Common myeloid progenitor, CD34-positive (primary cell): ENCODE measurements at regions of chr6 and their contacts with region 1.

Region 1: DNA sequence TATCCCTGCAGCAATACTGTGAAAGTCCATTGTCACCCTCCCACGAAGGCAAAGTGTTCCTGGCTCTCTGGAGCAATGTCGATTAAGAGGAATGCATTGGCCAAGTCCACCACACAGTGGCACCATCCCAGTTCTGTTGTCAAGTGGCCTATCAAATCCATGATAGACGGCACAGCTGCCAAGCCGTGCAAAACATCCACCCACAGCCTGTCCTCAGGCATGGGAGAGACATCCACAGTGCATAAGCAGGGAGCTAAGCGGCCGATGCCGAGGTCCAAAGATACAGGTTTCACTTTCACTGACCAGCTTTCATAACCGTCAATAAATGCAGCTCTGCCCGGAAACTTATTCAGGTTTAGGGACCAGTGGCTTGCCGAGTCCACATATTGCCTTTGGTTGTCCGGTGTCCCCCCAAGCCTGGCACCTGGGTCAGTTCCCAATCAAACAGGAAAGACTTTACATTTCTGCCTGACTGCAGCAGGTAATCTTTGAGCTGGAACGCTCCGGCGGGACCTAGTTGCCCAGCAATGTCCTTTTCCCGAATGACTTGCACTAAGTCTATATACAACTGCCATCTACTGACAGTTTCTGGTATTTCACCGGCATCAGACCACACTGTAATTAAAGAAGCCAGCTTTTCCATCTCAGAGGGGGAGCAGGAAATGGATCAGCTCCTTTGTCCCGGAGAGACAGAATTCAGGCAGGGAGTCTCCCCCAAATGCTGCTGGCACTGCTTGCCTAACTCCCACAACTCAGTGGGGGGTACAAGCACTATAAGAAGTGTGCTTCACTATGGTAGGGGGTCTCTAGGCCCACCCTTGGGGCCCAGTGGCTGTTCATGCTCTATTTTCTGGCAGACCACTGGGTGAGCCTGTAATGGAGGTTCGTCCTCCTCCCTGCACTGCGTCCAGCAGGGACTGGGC is 6.3 kb downstream of the ZKSCAN3 start:
- DNase-seq: peak; percentile 85 to 92 (median 91)
- H3K4me3 ChIP-seq: peak overlapping the region; percentile 67 to 96 (median 88)
- H3K27ac ChIP-seq: peak overlapping the region; percentile 61 to 86
- H3K4me1 ChIP-seq: peaks cover 5 to 40% (median 32%) of the 10 kb centered on the region in 4 experiments
- H3K27me3 ChIP-seq: no peaks in the 10 kb centered on the region

Region 2: GRCh38 chr6:28134015-28134414 is 222.0 kb before region 1 on chr6:
- CTCF ChIA-PET with region 1: interaction called, 12 read pairs
- POLR2A ChIA-PET with region 1: no interaction called
- DNase-seq: peak; percentile 69 to 76 (median 75)
- H3K4me3 ChIP-seq: no peak overlapping the region
- H3K27ac ChIP-seq: no peak overlapping the region
- H3K4me1 ChIP-seq: peaks cover 10 to 33% (median 22%) of the 10 kb centered on the region in 4 experiments
- H3K27me3 ChIP-seq: no peaks in the 10 kb centered on the region

Region 3: GRCh38 chr6:28266962-28267694 is 88.9 kb before region 1 on chr6 and contains the start of gene ZSCAN26:
- CTCF ChIA-PET with region 1: interaction called, 15 read pairs
- POLR2A ChIA-PET with region 1: no interaction called
- DNase-seq: peak; percentile 93 to 97 (median 96)
- H3K4me3 ChIP-seq: peak within 1 kb of the TSS; percentile 52 to 95 (median 90)
- H3K27ac ChIP-seq: peak within 1 kb of the TSS; percentile 74 to 90
- H3K4me1 ChIP-seq: peaks cover 11 to 40% (median 19%) of the 10 kb centered on the region in 4 experiments
- H3K27me3 ChIP-seq: no peaks in the 10 kb centered on the region

Region 4: DNA sequence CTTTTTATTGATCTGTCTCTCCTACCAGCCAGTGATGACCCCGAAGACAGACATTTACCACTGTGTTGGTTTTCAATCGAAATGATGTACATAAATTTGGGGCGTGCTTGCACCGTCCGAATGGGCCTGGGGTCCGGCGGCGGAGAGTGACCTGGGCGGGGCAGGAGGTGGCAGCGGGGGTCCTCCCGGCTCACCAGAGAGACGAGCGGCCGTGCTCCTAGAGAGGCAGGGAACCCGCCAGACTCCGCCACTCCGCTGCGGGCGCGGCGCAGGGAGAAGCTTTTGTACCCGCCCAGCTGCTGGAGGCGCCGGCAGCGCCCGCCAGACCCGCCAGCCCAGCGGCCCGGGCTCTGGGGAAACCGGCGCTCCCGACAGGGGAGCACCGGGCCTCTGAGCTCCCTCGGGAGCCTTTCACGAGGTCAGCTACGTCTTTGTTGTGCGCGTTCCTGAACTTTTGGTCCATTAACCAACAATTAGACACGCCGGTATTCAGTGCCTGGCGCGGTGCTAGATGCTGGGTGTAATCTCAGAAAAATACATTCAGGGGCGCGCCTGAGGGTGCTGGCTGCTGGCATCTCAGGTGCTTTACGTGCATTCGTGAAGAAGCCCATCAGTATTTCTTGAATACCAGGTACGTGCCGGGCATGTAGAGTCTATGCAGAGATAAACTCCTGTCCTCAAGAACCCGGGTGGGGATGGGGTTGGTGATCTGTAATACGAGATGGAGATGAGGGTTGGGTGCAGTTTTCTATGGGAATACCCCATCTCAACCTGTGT is 74.5 kb before region 1 on chr6 and contains the start of gene PGBD1:
- CTCF ChIA-PET with region 1: interaction called, 13 read pairs
- POLR2A ChIA-PET with region 1: no interaction called
- DNase-seq: peak; percentile 70 to 77 (median 74)
- H3K4me3 ChIP-seq: peak within 1 kb of the TSS; percentile 58 to 88 (median 81)
- H3K27ac ChIP-seq: peak within 1 kb of the TSS; percentile 42 to 72
- H3K4me1 ChIP-seq: peaks cover 0 to 15% (median 8%) of the 10 kb centered on the region in 4 experiments
- H3K27me3 ChIP-seq: no peaks in the 10 kb centered on the region

Region 5: GRCh38 chr6:28335564-28336283 is 20.3 kb before region 1 on chr6 and contains the start of gene ZSCAN31:
- CTCF ChIA-PET with region 1: interaction called, 42 read pairs
- POLR2A ChIA-PET with region 1: interaction called, 20 read pairs
- DNase-seq: peak; percentile 99
- H3K4me3 ChIP-seq: peak within 1 kb of the TSS; percentile 60 to 96 (median 90)
- H3K27ac ChIP-seq: peak within 1 kb of the TSS; percentile 95 to 99
- H3K4me1 ChIP-seq: peaks cover 9 to 46% (median 28%) of the 10 kb centered on the region in 4 experiments
- H3K27me3 ChIP-seq: no peaks in the 10 kb centered on the region

Region 6: DNA sequence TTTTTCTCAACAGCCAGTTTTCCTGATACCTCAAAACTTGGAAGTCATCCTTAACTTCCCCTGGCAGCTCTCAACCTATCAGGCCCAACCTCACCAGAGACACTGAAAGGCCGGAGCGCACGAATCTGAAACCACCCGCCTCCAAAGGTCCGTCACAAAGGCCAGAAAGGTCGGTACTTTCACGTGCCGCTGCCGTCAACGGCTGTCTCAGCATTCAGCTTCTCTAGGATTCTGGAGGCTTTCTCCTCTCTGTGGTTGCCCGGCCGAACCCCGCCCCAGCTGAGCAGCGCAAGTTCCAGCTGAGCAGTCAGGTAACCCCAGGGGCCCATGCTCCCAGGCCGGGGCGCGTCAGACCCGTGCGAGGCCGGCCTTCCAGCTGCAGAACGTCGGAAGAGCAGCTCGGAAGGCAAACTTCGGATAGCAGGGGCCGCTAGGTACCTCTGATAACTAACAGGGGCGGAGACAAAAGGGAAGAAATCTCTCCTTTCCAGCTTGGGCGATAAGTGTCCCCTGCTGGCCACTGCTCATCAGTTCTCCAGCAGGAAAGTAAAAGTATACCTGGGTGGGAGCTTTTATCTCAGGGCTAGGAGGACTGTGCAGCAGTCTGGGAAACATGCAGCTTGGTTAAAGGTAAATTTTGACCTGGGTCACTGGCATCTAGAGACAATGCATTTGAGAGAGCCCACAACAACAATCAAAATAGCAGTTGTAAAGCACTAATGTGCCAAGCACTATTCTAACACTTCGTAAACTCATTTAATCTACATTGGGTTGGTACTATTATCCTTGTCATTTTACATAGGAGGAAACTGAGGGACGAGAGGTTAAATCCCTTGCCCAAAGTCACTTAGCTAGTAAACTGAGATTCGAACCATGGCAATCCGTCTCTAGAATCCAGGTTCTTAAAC is 27.5 kb after region 1 on chr6:
- CTCF ChIA-PET with region 1: interaction called, 34 read pairs
- POLR2A ChIA-PET with region 1: interaction called, 4 read pairs
- DNase-seq: peak; percentile 86 to 91 (median 90)
- H3K4me3 ChIP-seq: peak overlapping the region; percentile 36 to 83 (median 73)
- H3K27ac ChIP-seq: peak overlapping the region; percentile 72 to 85
- H3K4me1 ChIP-seq: peaks cover 0 to 17% (median 8%) of the 10 kb centered on the region in 4 experiments
- H3K27me3 ChIP-seq: no peaks in the 10 kb centered on the region

Region 7: GRCh38 chr6:28615955-28616747 is 260.1 kb after region 1 on chr6:
- CTCF ChIA-PET with region 1: no interaction called
- POLR2A ChIA-PET with region 1: no interaction called
- DNase-seq: no peak
- H3K4me3 ChIP-seq: peak overlapping the region in 1 of 7 experiments; percentile 1
- H3K27ac ChIP-seq: peak overlapping the region in 1 of 2 experiments; percentile 79
- H3K4me1 ChIP-seq: no peaks in the 10 kb centered on the region
- H3K27me3 ChIP-seq: peaks cover 5 to 74% (median 16%) of the 10 kb centered on the region in 5 experiments